Body of pancreas (tissue), 4 donors: ENCODE measurements at regions of chr10 and their contacts with region 1.

Region 1: GRCh38 chr10:31952066-31952465 is 23.4 kb upstream of the ARHGAP12 start:
- DNase-seq: no peak
- ATAC-seq: no peak
- H3K4me3 ChIP-seq: no peak overlapping the region
- H3K27ac ChIP-seq: no peak overlapping the region
- H3K4me1 ChIP-seq: peaks cover 9% of the 10 kb centered on the region
- H3K27me3 ChIP-seq: no peaks in the 10 kb centered on the region
- CTCF ChIP-seq: no peak
- POLR2A ChIP-seq: no peak

Region 2: GRCh38 chr10:31851216-31851615 is 100.8 kb before region 1 on chr10:
- intact Hi-C with region 1: loop called (anchors 10 kb)
- DNase-seq: no peak
- ATAC-seq: no peak
- H3K4me3 ChIP-seq: no peak overlapping the region
- H3K27ac ChIP-seq: no peak overlapping the region
- H3K4me1 ChIP-seq: peaks cover 3% of the 10 kb centered on the region
- H3K27me3 ChIP-seq: no peaks in the 10 kb centered on the region
- CTCF ChIP-seq: no peak
- POLR2A ChIP-seq: no peak